HepG2 (cell line): ENCODE measurements at regions of chr6 and their contacts with region 1.

Region 1: DNA sequence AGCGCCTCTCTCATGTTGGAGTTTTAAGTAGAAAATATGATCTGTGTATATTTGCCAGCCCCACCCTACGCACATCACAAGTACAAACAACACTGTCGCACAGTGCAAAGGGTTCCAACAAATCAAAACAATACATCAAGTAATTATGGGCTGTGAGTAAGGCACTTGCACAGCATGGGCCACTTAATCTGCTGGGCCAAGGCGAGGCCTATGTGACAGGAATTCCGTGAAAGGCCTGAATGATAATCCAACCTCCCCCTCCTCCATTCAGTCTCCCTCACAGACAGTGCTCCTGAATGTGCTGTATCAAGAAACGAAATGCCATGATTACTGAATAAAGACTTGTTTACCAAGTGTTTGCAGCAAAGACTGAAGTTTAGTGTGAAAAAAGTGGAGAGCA is 130.1 kb upstream of the SLC2A12 start:
- DNase-seq: no peak
- ATAC-seq: no peak
- H3K4me3 ChIP-seq: no peak overlapping the region
- H3K27ac ChIP-seq: no peak overlapping the region
- H3K4me1 ChIP-seq: peaks cover 85% of the 10 kb centered on the region
- H3K27me3 ChIP-seq: no peaks in the 10 kb centered on the region
- CTCF ChIP-seq: no peak
- EP300 ChIP-seq: no peak
- POLR2A ChIP-seq: no peak
- RAD21 ChIP-seq: no peak

Region 2: DNA sequence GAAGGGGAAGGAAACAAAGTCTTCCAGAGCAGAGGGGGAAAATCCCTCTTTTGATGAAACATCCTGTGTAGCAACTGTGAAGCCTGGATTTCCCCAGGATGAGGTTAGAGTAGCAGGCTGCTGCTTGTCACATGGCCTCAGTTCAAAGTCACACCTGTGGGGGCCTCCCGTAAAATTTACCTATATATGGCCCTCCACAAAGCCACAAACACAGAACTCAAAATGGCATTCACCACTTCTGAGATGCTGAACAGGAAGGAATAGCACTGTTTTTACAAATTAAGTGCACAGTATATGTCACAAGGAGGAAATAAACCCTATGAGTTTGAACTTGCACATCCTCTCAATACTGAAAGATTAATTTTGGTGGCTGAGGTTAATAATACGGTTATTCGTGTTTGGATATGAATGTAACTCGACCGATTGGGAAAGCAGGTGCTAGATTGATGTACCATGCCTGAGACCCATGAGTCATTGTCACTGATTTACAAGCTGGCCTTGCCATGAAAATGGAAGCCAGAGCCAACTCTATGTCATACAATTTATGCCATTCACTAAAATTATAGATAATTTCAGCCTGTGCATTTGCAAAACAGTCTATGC is 64.8 kb after region 1 on chr6:
- CTCF ChIA-PET with region 1: no interaction called
- POLR2A ChIA-PET with region 1: no interaction called
- in situ Hi-C with region 1: loop called (anchors 5 kb)
- intact Hi-C with region 1: no loop called
- DNase-seq: no peak
- ATAC-seq: no peak
- H3K4me3 ChIP-seq: no peak overlapping the region
- H3K27ac ChIP-seq: no peak overlapping the region
- H3K4me1 ChIP-seq: peaks cover 59% of the 10 kb centered on the region
- H3K27me3 ChIP-seq: no peaks in the 10 kb centered on the region
- CTCF ChIP-seq: no peak
- EP300 ChIP-seq: 0 out of 4 replicates have a peak, but pooled peaks of 1 of the 2 experiments have one; percentile 32
- POLR2A ChIP-seq: no peak
- RAD21 ChIP-seq: no peak

Region 3: DNA sequence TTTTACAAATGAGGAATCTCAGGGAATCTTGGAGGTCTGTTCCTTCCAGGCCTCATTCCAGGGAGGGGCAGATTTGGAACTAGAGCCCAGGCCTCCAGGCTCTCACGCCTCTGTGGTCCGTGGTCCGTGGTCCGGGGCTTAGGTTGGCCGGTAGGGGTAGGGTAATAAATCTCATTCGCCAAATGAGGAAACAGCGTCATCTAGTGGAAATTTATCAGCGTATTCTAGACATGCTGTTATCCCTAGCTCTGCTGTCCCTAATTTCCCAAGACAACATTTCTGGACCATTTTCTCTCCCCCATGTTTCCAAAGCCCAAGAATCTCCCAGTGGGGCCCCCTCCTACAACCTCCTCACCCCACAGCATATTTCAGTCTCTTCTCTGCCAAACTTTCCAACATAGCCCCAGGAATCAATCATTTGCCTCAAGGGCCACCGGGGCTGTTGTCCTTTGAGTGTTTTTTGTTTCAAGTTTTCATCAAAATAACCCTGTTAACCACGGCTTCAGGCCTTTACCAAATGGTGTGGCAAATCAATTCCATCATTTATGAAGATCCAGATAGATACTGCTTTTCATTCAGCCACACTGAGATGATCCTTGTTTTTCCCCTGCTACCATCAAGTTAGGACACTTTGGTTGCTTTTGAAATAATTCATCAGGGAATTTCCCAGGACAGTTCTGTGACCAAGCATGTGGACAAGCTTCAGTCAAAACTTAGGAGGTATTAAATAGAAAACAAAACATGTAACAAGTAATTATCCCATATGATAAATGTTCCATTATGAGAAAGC is 640.6 kb after region 1 on chr6:
- CTCF ChIA-PET with region 1: no interaction called
- POLR2A ChIA-PET with region 1: no interaction called
- in situ Hi-C with region 1: no loop called
- intact Hi-C with region 1: no loop called
- DNase-seq: peak; percentile 82
- ATAC-seq: peak; percentile 100
- H3K4me3 ChIP-seq: no peak overlapping the region
- H3K27ac ChIP-seq: no peak overlapping the region
- H3K4me1 ChIP-seq: no peaks in the 10 kb centered on the region
- H3K27me3 ChIP-seq: peaks cover 2 to 10% of the 10 kb centered on the region in 2 experiments; a peak in 2 of 5 replicates
- CTCF ChIP-seq: peak; percentile 86
- EP300 ChIP-seq: no peak
- POLR2A ChIP-seq: no peak
- RAD21 ChIP-seq: peak; percentile 97